GM10248 (cell line): ENCODE measurements at regions of chr12 and their contacts with region 1.

Region 1: GRCh38 chr12:131104463-131105350 is 151.0 kb downstream of the ADGRD1 start:
- DNase-seq: peak; percentile 87
- CTCF ChIP-seq: peak; percentile 93

Region 2: GRCh38 chr12:131035268-131035681 is 69.4 kb before region 1 on chr12:
- CTCF ChIA-PET with region 1: no interaction called
- POLR2A ChIA-PET with region 1: no interaction called
- DNase-seq: peak; percentile 78
- CTCF ChIP-seq: no peak

Region 3: DNA sequence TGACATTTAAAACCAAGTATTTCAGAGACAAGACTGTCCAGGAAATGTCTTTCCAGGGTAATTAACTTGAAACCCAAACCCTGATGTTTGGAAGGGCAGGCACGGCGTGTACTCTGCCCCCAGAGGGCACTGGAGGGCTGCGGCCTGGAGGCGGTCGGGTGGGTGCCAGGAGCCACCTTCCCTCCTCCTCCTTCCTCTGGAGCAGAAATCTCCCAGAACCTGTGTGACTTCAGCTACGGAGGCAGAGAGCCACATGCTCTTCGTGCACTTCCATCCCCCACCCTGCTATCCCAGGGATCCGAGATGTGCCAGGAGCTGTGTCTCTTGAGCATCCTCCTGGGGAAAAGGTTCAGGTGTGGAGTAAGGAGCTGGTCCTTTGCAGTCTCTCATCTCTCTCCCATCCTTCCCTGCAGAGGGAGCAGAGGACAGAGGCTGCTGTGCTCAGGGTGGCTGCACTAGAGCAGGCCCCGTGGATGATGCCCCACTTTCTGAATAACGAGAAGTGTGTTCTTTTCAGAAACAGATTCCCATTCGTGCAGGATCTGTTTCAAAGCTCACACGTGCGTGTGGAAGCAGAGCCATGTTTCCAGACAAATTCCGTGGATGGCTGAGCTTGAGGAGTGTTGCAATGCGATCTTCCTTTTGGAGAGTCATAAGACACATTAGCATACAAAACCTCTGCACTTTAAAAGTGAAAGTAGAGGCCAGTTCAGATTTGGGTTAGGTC is 11.8 kb after region 1 on chr12:
- CTCF ChIA-PET with region 1: interaction called, 88 read pairs
- POLR2A ChIA-PET with region 1: no interaction called
- DNase-seq: no peak
- CTCF ChIP-seq: peak; percentile 28

Region 4: DNA sequence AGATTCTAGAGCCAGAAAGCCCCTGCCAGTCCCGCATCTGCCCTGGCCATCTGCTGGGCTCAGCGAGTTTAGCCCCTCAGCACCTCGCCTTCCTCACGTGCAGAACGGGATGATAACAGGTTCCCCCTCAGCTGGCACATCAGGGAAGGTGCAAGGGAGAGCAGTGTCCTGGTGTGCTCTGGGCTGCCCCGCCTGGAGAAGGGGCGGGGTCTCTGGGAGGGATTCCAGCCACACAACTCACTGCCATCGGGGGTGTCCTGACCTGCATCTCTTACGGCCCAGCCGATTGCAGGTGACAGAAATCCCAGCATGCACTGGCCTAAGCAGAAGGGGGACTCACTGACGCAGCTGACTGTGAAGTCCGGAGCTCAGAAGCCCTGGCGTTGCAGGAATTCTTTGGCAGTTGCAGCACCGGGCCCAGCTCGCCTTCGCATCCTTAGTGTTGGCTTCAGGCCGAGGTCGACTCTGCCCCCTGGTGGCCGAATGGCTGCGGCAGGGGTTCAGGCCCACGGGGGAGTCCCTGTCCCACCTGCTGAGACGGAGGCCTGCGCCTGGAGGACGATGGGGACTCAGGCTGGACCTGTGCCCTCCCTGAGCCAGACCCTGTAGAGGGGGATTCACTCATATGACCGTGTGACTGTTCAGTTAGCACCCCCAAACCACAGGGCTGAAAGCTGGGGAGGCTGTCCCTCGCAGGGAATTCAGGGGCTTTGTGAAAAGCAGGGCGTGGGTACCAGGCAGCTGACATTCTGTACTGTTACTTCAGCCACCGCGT is 27.6 kb after region 1 on chr12:
- CTCF ChIA-PET with region 1: interaction called, 72 read pairs
- POLR2A ChIA-PET with region 1: no interaction called
- DNase-seq: peak; percentile 84
- CTCF ChIP-seq: peak; percentile 80

Region 5: GRCh38 chr12:131825146-131825892 is 720.6 kb after region 1 on chr12:
- CTCF ChIA-PET with region 1: interaction called, 47 read pairs
- POLR2A ChIA-PET with region 1: no interaction called
- DNase-seq: no peak
- CTCF ChIP-seq: no peak